Calu3 (cell line): ENCODE measurements at regions of chr1 and their contacts with region 1.

Region 1: GRCh38 chr1:241733899-241734298 is 81.8 kb downstream of the WDR64 start:
- DNase-seq: no peak
- H3K4me3 Mint-ChIP-seq: no peak overlapping the region
- H3K27ac Mint-ChIP-seq: no peak overlapping the region
- H3K4me1 Mint-ChIP-seq: no peaks in the 10 kb centered on the region
- H3K27me3 Mint-ChIP-seq: peaks cover 7% of the 10 kb centered on the region
- CTCF ChIP-seq: no peak

Region 2: DNA sequence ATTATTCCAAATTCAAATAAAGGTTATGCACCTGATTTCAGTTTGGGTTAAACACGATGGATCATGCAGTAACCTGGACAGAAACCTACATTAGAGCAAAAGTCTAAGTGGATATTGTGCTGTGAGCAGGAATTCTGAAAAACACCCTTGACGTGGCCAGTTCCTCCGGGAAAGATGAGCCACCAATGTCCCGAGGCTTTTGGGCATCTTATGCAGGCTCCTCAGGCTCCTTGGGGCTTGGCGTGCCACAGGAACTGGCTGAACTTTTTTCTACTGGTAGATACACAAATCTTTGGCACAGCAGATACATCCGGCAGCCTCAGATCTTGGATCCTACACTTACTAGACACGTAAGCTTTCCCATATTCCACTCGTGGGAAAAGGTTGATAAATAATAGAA is 167.2 kb before region 1 on chr1:
- CTCF ChIA-PET with region 1: no interaction called
- intact Hi-C with region 1: no loop called
- DNase-seq: no peak
- H3K4me3 Mint-ChIP-seq: no peak overlapping the region
- H3K27ac Mint-ChIP-seq: no peak overlapping the region
- H3K4me1 Mint-ChIP-seq: no peaks in the 10 kb centered on the region
- H3K27me3 Mint-ChIP-seq: no peaks in the 10 kb centered on the region
- CTCF ChIP-seq: no peak

Region 3: GRCh38 chr1:241706954-241707365 is 26.9 kb before region 1 on chr1:
- CTCF ChIA-PET with region 1: no interaction called
- intact Hi-C with region 1: loop called (anchors 2 kb)
- DNase-seq: peak; percentile 64
- H3K4me3 Mint-ChIP-seq: peak overlapping the region; percentile 48
- H3K27ac Mint-ChIP-seq: peak overlapping the region; percentile 72
- H3K4me1 Mint-ChIP-seq: peaks cover 15% of the 10 kb centered on the region
- H3K27me3 Mint-ChIP-seq: no peaks in the 10 kb centered on the region
- CTCF ChIP-seq: no peak